Common myeloid progenitor, CD34-positive (primary cell): ENCODE measurements at regions of chr3 and their contacts with region 1.

Region 1: DNA sequence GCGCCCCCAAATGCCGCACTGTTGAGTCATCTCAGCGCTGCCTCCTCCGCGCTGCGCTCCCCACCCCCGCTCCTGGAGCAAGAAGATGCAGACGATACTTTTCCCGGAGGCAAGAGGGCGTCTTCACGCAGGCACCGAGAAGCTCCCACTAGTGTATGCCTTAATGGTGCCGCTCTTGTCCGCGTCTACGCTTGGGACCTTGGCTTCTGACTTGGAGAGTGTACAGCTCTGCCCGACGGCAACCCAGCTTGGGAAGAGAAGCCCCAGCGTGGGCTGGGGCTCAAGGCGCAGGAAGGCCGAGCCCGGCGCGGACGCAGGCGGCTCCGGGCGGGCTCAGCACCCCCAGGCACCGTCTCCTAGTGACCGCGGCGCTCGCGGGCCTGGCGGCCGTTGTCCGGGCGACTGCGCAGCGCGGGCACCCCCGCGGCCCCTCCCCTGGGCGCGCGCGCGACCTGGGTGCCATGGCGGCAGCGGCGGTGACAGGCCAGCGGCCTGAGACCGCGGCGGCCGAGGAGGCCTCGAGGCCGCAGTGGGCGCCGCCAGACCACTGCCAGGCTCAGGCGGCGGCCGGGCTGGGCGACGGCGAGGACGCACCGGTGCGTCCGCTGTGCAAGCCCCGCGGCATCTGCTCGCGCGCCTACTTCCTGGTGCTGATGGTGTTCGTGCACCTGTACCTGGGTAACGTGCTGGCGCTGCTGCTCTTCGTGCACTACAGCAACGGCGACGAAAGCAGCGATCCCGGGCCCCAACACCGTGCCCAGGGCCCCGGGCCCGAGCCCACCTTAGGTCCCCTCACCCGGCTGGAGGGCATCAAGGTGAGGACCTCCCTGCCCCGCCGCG is at the start of gene P4HTM:
- DNase-seq: peak; percentile 85 to 91 (median 89)
- H3K4me3 ChIP-seq: peak within 1 kb of the TSS; percentile 59 to 95 (median 87)
- H3K27ac ChIP-seq: peak within 1 kb of the TSS; percentile 80 to 86
- H3K4me1 ChIP-seq: peaks cover 0 to 41% (median 36%) of the 10 kb centered on the region in 4 experiments
- H3K27me3 ChIP-seq: no peaks in the 10 kb centered on the region

Region 2: GRCh38 chr3:48926425-48927392 is 63.3 kb before region 1 on chr3:
- CTCF ChIA-PET with region 1: no interaction called
- POLR2A ChIA-PET with region 1: no interaction called
- DNase-seq: no peak
- H3K4me3 ChIP-seq: no peak overlapping the region
- H3K27ac ChIP-seq: no peak overlapping the region
- H3K4me1 ChIP-seq: peaks cover 0 to 24% (median 15%) of the 10 kb centered on the region in 4 experiments
- H3K27me3 ChIP-seq: no peaks in the 10 kb centered on the region

Region 3: DNA sequence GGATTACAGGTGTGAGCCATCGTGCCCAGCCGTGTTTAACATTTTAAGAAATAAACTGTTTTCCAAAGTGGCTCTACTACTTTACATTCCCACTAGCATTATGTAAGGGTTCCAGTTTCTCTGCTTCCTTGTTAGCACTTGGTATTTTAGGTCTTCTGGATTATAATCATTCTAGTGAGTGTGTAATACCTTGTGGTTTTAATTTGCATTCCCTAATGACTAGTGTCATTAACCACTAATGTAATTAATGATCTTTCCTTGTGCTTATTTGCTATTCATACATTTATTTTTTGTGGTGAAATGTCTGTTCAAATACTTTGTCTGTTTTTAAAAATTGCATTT is 40.7 kb before region 1 on chr3:
- CTCF ChIA-PET with region 1: no interaction called
- POLR2A ChIA-PET with region 1: no interaction called
- DNase-seq: no peak
- H3K4me3 ChIP-seq: no peak overlapping the region
- H3K27ac ChIP-seq: no peak overlapping the region
- H3K4me1 ChIP-seq: no peaks in the 10 kb centered on the region
- H3K27me3 ChIP-seq: no peaks in the 10 kb centered on the region

Region 4: GRCh38 chr3:49007068-49007770 is 17.2 kb after region 1 on chr3 and contains the start of gene WDR6:
- CTCF ChIA-PET with region 1: interaction called, 386 read pairs
- POLR2A ChIA-PET with region 1: interaction called, 69 read pairs
- DNase-seq: peak; percentile 97 to 99 (median 99)
- H3K4me3 ChIP-seq: peak within 1 kb of the TSS; percentile 58 to 87 (median 83)
- H3K27ac ChIP-seq: peak within 1 kb of the TSS; percentile 85 to 94
- H3K4me1 ChIP-seq: peaks cover 1 to 23% (median 23%) of the 10 kb centered on the region in 4 experiments
- H3K27me3 ChIP-seq: no peaks in the 10 kb centered on the region

Region 5: GRCh38 chr3:49021813-49022687 is 32.0 kb after region 1 on chr3 and contains the start of gene NDUFAF3:
- CTCF ChIA-PET with region 1: interaction called, 386 read pairs
- POLR2A ChIA-PET with region 1: interaction called, 13 read pairs
- DNase-seq: peak; percentile 91 to 93 (median 92)
- H3K4me3 ChIP-seq: peak within 1 kb of the TSS; percentile 73 to 94 (median 82)
- H3K27ac ChIP-seq: peak within 1 kb of the TSS; percentile 95 to 98
- H3K4me1 ChIP-seq: peaks cover 6 to 70% (median 52%) of the 10 kb centered on the region in 4 experiments
- H3K27me3 ChIP-seq: no peaks in the 10 kb centered on the region